ENCODE measurements at regions of chr5 and their contacts with region 1.

Region 1: DNA sequence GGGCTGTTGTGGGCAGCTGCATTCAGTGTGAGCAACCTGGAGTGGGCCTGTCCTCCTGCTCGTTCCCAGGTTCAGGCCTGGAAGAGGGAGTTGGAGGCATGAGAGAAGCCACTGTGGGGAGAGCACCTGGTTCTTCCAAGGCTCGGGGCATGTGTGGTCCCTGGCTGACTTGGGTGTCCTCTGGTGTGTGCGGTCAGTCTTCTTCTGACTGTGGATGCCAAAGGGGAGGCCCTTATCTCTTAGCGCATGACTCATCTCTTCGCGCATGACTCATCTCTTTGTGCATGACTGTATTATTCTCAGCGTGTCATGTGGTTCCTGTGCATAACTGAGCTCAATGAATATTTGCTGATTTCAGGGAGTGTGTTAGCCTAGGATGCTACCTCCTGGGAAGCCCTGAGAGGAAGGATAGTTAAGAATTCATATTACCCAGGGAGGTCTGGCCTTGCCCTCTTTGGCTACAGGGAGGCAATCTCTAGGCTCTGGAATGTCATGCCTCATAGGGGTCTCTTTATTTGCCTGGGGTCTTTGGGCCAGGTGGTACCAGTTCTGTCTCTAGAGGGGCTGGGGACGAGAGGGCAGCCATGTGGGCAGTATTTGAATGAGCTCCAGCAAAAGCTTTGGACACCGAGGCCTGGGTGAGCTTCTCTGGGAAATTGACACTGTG is 188.7 kb downstream of the HSPA4 start:
- DNase-seq: no peak

Region 2: DNA sequence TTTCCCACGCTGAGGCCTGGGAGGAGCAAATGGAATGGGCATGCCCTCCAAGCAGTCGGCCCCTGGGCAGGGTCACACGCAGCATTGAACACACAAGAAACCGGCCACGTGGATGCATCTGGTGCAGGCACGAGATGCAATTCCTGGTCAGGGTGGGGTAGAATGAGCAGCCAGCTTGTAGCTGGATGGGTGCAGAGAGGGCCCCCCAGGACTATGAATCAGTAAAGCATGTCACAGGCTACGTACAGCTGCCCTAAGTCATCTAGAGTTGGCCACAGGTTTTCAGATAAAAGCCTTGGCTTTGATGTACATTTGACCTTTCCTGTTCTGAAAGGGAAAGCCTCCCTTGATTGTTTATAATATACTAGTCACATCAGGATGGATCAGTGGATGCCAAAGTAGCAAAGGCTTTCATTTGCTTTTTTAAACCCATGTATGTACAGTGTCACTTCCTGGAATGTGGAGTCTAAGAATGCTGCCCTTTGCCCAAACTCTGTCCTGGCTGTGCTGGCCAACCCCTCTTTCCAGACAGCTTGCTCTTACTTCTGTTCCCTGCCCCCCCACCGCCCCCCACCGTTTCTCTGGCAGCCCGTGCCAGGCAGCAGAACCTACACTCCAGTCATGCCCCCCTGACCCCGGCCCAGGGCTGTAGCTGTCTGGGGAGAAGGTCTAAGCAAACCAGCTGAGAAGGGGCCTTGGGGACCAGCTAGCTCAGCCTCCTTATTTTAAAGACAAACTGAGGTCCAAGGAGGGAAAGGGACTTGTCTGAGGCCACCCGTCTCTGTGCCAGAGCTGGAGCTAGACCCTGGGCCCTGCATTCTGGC is 19.5 kb before region 1 on chr5:
- CTCF ChIA-PET with region 1: interaction called, 3 read pairs
- POLR2A ChIA-PET with region 1: interaction called, 10 read pairs
- DNase-seq: no peak

Region 3: GRCh38 chr5:133321833-133322420 is 81.4 kb after region 1 on chr5:
- CTCF ChIA-PET with region 1: no interaction called
- POLR2A ChIA-PET with region 1: no interaction called
- DNase-seq: no peak

Region 4: GRCh38 chr5:133460172-133460758 is 219.7 kb after region 1 on chr5:
- CTCF ChIA-PET with region 1: no interaction called
- POLR2A ChIA-PET with region 1: no interaction called
- DNase-seq: peak; percentile 68

Measured in HEK293T (cell line).